Caco-2 (cell line): ENCODE measurements at regions of chr10 and their contacts with region 1.

Region 1: DNA sequence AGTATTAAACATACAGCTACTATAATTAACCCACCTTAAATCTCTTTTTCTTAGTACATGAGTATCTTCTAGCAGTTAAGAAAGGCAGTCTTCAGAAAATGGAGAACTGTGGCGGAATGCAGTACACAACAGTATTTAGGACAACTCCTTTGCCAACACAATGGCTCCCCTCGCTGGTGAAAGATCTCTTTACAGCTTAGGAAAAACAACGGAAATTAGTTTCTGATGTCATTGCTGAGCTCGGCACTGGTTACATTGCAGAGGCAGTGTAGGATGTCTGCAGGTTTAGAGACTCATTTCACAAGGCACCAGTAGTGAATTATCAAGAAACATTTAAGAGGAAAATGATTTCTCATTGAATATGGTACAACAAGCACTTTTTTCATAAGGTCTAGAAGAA is 43.4 kb downstream of the GLRX3 start:
- DNase-seq: peak in 1 of 2 experiments; percentile 65
- H3K4me3 ChIP-seq: no peak overlapping the region
- H3K4me3 Mint-ChIP-seq: no peak overlapping the region
- H3K27ac Mint-ChIP-seq: no peak overlapping the region
- H3K4me1 ChIP-seq: no peaks in the 10 kb centered on the region
- H3K4me1 Mint-ChIP-seq: no peaks in the 10 kb centered on the region
- H3K27me3 ChIP-seq: no peaks in the 10 kb centered on the region
- H3K27me3 Mint-ChIP-seq: no peaks in the 10 kb centered on the region
- CTCF ChIP-seq: peak in 1 of 2 experiments; percentile 62

Region 2: DNA sequence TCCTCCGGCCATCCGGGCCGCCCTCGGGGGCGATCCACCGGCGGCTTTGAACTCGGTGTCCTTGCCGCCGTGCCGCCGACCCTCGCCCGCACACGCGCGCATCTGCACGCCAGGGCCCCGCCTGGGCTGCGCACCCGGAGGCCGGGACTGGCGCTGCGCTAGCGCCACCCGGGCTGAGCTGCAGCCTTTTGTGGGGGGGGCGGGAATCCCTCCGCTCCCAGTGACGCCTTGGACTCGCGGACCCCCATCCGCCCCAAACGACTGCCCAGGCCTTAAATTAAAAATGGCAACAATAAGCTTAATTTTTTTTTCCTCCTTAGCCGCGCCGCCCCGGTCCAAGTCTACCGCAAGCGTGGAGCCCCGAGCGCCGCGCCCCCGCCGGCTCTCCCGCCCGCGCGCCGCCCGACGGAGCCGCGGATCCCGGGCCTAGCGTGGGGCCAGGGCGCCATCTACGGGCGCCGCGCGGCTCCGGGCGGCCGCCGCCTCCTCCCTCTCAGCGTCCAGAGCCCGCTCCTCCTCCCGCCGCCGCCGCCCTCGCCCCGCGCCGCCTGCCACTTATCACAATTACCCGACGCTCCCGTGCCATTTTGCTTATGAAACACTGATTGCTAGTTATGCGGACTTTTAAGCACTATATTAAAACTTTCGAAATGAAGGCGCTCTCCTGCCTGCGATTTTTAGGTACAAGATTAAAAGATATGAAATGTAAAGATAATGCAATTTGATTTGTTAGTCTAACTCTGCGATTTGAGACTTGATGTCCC is 208.1 kb before region 1 on chr10:
- CTCF ChIA-PET with region 1: no interaction called
- POLR2A ChIA-PET with region 1: no interaction called
- intact Hi-C with region 1: loop called (anchors 2 kb)
- DNase-seq: peak in 1 of 2 experiments; percentile 80
- H3K4me3 ChIP-seq: peak overlapping the region; percentile 52
- H3K4me3 Mint-ChIP-seq: peak overlapping the region; percentile 52
- H3K27ac Mint-ChIP-seq: no peak overlapping the region
- H3K4me1 ChIP-seq: peaks cover 11% of the 10 kb centered on the region; the same call in 1 of the 2 replicates
- H3K4me1 Mint-ChIP-seq: no peaks in the 10 kb centered on the region
- H3K27me3 ChIP-seq: 0 out of 2 replicates have a peak, but pooled peaks cover 1% of the 10 kb centered on the region
- H3K27me3 Mint-ChIP-seq: peaks cover 19% of the 10 kb centered on the region
- CTCF ChIP-seq: peak; percentile 50

Region 3: DNA sequence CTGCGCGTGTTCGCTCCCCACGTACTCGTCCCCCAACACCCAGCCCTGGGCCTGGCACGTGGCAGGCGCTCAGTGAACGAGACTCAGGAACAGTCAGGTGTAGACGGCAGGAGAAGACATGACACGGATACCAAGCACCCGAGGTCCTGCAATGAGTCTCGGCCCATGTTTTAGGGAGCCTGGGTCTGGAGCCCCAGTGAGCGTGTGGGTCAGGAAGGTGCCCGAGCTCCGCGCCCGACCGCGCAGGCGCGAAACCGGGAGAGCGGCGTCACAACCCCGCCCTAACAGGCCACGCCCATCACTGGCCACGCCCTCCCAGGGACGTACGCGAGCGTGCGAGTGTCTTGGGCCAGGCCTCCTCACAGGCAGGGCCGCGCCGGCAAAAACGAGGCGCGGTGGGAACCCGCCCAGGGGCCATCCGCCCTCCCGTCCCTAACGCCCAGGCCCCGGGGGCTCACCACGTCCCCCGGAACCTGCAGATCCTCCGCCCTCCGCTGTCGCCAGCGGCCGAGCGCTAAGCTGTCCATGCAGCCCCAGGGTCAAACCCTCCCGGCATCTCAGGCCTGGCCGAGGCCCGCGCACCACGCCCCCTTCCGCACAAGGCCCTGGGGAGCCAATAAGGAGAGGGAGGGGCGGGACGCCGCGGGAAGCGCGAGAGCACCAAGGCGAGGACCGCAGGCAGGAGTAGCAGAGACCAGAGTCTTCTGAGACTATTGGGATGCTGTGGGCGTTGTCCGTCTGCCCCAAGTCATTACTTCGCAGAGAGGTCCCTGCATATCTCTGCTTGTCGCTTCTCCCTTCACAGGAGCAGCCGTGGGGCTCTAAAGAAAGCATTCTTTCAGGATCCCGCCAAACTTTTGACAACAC is 69.2 kb before region 1 on chr10 and contains the start of gene C10orf143:
- CTCF ChIA-PET with region 1: interaction called, 14 read pairs
- POLR2A ChIA-PET with region 1: no interaction called
- intact Hi-C with region 1: no loop called
- DNase-seq: peak; percentile 97 to 98
- H3K4me3 ChIP-seq: peak within 1 kb of the TSS; percentile 82
- H3K4me3 Mint-ChIP-seq: peak within 1 kb of the TSS; percentile 91
- H3K27ac Mint-ChIP-seq: peak within 1 kb of the TSS; percentile 91
- H3K4me1 ChIP-seq: peaks cover 5% of the 10 kb centered on the region
- H3K4me1 Mint-ChIP-seq: peaks cover 7% of the 10 kb centered on the region
- H3K27me3 ChIP-seq: no peaks in the 10 kb centered on the region
- H3K27me3 Mint-ChIP-seq: no peaks in the 10 kb centered on the region
- CTCF ChIP-seq: peak in 1 of 2 experiments; percentile 4
- total RNA-seq, gene C10orf143: 0.54 TPM in 1 of 2 replicates, not detected in the other

Region 4: GRCh38 chr10:130136226-130137089 is 43.2 kb before region 1 on chr10 and contains the start of gene GLRX3:
- CTCF ChIA-PET with region 1: interaction called, 5 read pairs
- POLR2A ChIA-PET with region 1: no interaction called
- intact Hi-C with region 1: loop called (anchors 2 kb)
- DNase-seq: peak; percentile 75 to 91
- H3K4me3 ChIP-seq: peak within 1 kb of the TSS; percentile 95
- H3K4me3 Mint-ChIP-seq: peak within 1 kb of the TSS; percentile 84
- H3K27ac Mint-ChIP-seq: peak within 1 kb of the TSS; percentile 50
- H3K4me1 ChIP-seq: peaks cover 10% of the 10 kb centered on the region
- H3K4me1 Mint-ChIP-seq: peaks cover 7% of the 10 kb centered on the region
- H3K27me3 ChIP-seq: no peaks in the 10 kb centered on the region
- H3K27me3 Mint-ChIP-seq: no peaks in the 10 kb centered on the region
- CTCF ChIP-seq: no peak
- total RNA-seq, gene GLRX3: 191 and 195 TPM in 2 replicates